Calu3 (cell line): ENCODE measurements at regions of chr12 and their contacts with region 1.

Region 1: GRCh38 chr12:125240717-125241116 is 175.5 kb downstream of the AACS start:
- DNase-seq: no peak
- H3K4me3 Mint-ChIP-seq: no peak overlapping the region
- H3K27ac Mint-ChIP-seq: no peak overlapping the region
- H3K4me1 Mint-ChIP-seq: no peaks in the 10 kb centered on the region
- H3K27me3 Mint-ChIP-seq: peaks cover 63% of the 10 kb centered on the region
- CTCF ChIP-seq: no peak

Region 2: GRCh38 chr12:125330645-125331341 is 90.1 kb after region 1 on chr12:
- CTCF ChIA-PET with region 1: interaction called, 3 read pairs
- intact Hi-C with region 1: loop called (anchors 5 kb)
- DNase-seq: peak; percentile 92
- H3K4me3 Mint-ChIP-seq: peak overlapping the region; percentile 45
- H3K27ac Mint-ChIP-seq: no peak overlapping the region
- H3K4me1 Mint-ChIP-seq: no peaks in the 10 kb centered on the region
- H3K27me3 Mint-ChIP-seq: peaks cover 86% of the 10 kb centered on the region
- CTCF ChIP-seq: peak; percentile 95